ENCODE measurements at regions of chr12 and their contacts with region 1.

Region 1: DNA sequence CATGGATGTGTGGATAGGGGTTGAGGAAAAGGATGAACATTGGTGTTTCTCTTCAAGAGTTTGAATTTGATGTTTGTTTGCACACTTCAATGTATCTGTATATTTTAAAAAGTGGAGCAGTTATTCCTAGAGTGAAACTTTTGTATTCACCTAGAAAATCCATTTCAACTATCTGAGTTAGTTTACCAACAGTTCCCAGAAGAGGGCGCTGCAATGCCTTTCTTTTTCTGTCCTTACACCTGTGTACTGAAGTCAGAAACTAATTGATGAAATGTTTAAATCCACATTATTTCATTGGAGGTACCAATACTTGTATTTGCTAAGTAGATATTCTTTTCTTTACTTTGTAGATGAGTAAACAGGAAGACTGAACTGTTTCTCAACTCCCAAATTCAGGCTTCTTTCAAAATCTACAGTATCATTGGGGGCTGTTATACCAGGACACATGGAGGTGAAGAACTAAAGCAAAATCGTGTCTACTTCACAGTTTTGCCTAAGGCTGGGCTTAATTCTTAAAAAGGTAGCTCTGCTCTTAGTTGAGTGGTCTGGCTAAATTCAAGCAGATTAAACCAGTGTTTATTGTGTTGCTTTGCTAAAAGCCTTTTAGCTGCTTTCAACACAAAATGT is 26.6 kb upstream of the KLRB1 start:
- H3K4me3 ChIP-seq: no peak overlapping the region
- H3K27ac ChIP-seq: no peak overlapping the region
- H3K4me1 ChIP-seq: no peaks in the 10 kb centered on the region
- CTCF ChIP-seq: no peak

Region 2: GRCh38 chr12:9509464-9510166 is 124.7 kb before region 1 on chr12:
- CTCF ChIA-PET with region 1: no interaction called
- POLR2A ChIA-PET with region 1: no interaction called
- H3K4me3 ChIP-seq: no peak overlapping the region
- H3K27ac ChIP-seq: no peak overlapping the region
- H3K4me1 ChIP-seq: no peaks in the 10 kb centered on the region
- CTCF ChIP-seq: no peak

Region 3: DNA sequence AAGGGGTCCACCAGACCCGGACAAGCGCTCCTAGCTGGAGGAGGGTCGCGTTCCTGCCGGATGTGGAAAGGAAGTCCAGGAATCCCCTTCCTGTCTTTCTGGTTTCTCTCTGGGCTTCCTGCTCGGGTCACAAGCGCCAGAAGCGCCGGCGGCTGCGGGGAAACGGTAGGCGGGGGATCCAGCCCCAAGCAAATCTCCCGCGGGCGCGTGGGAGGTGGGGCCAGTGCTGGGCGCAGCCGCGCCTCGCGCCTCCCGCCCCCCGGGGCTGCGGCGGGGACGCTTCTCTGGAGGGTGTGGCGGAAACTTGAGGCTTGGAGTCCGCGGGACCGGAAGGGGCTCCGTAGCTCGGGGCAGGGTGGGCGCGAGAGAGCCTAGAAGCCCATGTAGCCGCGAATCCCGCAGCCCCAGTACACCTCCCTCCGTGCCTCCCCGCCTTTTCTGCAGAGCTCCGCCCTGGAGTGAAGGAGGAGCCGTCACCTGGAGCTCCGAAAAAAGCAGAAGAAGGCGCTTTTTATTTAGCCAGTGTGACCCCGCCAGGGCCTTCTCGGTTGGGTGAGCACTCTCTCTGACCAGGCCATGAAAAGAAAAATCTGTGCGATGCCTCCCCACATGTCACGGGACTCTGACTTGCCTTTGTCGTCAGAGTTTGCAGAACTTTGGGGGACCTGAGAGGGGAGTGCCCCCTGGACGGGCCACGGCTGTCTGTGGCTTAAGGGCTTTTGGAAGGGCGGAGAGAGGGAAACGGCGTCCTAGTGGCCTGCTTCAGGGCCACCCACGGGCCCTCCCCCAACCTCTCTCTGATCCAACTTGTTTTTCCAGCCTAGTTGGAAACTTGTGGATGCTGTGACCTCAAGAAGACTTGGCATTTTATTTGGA is 13.8 kb after region 1 on chr12:
- CTCF ChIA-PET with region 1: interaction called, 15 read pairs
- POLR2A ChIA-PET with region 1: interaction called, 3 read pairs
- H3K4me3 ChIP-seq: peak overlapping the region; percentile 76
- H3K27ac ChIP-seq: peak overlapping the region; percentile 80
- H3K4me1 ChIP-seq: peaks cover 4% of the 10 kb centered on the region
- CTCF ChIP-seq: no peak

Region 4: DNA sequence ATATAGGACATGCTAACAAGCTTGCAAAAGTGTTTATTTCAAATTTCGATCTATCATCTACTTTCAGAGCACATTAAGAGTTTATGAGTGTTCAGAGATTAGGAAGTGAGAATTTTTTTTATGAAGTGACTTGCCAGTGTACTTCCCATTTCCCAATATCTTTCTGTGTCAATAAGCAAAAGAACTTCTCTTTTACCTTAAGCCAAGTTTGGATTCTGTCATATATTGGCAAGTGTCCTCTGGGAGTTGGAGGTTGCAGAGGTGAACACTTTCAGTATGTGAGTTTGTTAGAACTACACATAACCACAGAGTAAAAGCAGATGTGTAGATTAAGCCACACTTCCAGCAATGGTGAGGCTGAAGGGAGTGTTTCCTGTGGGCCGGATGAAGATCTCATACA is 176.4 kb after region 1 on chr12:
- CTCF ChIA-PET with region 1: no interaction called
- POLR2A ChIA-PET with region 1: no interaction called
- H3K4me3 ChIP-seq: no peak overlapping the region
- H3K27ac ChIP-seq: no peak overlapping the region
- H3K4me1 ChIP-seq: no peaks in the 10 kb centered on the region
- CTCF ChIP-seq: no peak

Measured in HEK293 (cell line).